ENCODE measurements at regions of chr5 and their contacts with region 1.

Region 1: DNA sequence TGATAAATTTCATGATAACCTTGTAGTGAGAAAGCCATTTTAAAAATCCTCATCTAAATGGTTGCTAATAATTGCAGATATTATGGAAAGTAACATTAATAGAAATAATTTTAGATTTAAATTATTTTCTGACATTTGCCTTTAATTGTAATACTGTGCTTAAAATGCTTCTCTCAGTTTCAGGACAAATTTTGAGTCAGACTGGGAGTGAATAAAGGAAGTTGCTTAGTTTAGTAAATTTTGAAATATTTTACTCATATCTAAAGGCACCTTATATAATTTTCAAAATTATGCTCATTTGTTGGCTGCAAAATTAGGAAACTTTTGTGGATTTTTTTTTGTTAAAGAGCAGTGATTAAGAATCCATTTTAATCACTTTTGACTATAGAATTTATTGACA is 93.8 kb downstream of the CSNK1G3 start:
- DNase-seq: no peak
- ATAC-seq: no peak
- H3K4me3 ChIP-seq: no peak overlapping the region
- H3K27ac ChIP-seq: no peak overlapping the region
- H3K4me1 ChIP-seq: no peaks in the 10 kb centered on the region
- H3K27me3 ChIP-seq: no peaks in the 10 kb centered on the region
- CTCF ChIP-seq: no peak
- POLR2A ChIP-seq: no peak
- RAD21 ChIP-seq: no peak

Region 2: GRCh38 chr5:123398058-123398733 is 207.6 kb before region 1 on chr5:
- CTCF ChIA-PET with region 1: no interaction called
- POLR2A ChIA-PET with region 1: no interaction called
- dilution Hi-C with region 1: no loop called
- in situ Hi-C with region 1: no loop called
- intact Hi-C with region 1: loop called (anchors 10 kb)
- DNase-seq: no peak
- ATAC-seq: no peak
- H3K4me3 ChIP-seq: no peak overlapping the region
- H3K27ac ChIP-seq: no peak overlapping the region
- H3K4me1 ChIP-seq: no peaks in the 10 kb centered on the region
- H3K27me3 ChIP-seq: no peaks in the 10 kb centered on the region
- CTCF ChIP-seq: no peak
- POLR2A ChIP-seq: no peak
- RAD21 ChIP-seq: no peak

Region 3: DNA sequence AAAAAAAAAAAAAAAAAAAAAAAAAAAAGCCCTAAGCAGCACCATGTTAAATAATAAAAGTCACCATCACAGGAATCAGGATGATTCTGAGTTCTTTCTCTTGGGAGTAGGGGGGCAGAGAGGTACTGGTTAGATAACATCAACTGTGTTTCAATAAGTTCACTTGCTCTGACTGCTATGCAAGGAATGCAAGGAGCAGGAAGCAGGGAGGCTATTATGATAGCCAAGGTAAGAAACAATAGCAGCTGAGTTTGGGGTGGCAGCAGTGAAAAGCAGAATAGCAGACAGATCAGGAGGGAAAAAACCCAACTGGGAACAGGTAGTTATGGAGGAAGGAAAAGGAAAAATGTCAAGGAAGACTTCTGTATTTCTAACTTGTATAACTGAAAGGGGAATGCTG is 190.8 kb before region 1 on chr5:
- CTCF ChIA-PET with region 1: interaction called, 7 read pairs
- POLR2A ChIA-PET with region 1: no interaction called
- dilution Hi-C with region 1: no loop called
- in situ Hi-C with region 1: loop called (anchors 10 kb)
- intact Hi-C with region 1: no loop called
- DNase-seq: no peak
- ATAC-seq: no peak
- H3K4me3 ChIP-seq: no peak overlapping the region
- H3K27ac ChIP-seq: no peak overlapping the region
- H3K4me1 ChIP-seq: no peaks in the 10 kb centered on the region
- H3K27me3 ChIP-seq: no peaks in the 10 kb centered on the region
- CTCF ChIP-seq: no peak
- POLR2A ChIP-seq: no peak
- RAD21 ChIP-seq: no peak

Region 4: DNA sequence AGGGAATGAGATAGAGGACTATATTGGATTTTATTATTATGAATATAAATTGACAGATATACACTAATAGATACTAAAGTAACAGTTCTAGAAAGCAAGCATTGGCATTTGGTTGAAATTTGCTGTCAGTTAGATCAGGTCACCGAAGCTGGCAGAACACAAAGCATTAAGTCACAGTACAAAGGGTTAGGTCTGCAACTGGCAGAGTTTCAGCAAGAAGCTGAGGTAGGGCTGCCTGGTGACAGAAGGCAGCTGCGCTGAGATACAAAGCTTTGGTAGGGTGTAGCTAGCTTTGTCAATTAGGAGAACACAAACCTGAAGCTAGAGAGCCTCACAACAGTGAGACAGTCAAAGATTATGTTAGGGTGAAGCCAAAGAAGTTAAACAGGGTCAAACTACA is 100.2 kb before region 1 on chr5:
- CTCF ChIA-PET with region 1: no interaction called
- POLR2A ChIA-PET with region 1: no interaction called
- dilution Hi-C with region 1: no loop called
- in situ Hi-C with region 1: no loop called
- intact Hi-C with region 1: no loop called
- DNase-seq: no peak
- ATAC-seq: no peak
- H3K4me3 ChIP-seq: no peak overlapping the region
- H3K27ac ChIP-seq: no peak overlapping the region
- H3K4me1 ChIP-seq: peaks cover 2% of the 10 kb centered on the region; the same call in 1 of the 2 replicates
- H3K27me3 ChIP-seq: peaks cover 3% of the 10 kb centered on the region; the same call in 1 of the 2 replicates
- CTCF ChIP-seq: no peak
- POLR2A ChIP-seq: no peak
- RAD21 ChIP-seq: no peak

Region 5: DNA sequence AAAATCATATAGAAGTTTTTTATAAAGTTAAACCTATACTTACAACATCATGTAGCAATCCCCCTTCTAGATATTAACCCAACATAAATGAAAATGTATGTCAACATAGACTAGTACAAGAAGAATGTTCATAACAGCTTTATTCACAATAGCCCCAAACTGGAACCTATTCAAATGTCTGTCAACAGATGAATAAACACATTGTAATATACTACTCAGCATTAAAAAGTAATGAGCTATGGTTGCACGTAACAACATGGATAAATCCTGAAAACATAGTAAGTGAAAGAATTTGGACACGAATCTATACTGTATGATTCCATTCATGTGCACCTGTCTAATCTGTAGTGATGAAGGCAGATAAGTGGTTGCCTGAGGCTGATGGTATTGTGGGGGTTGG is 20.0 kb before region 1 on chr5:
- CTCF ChIA-PET with region 1: no interaction called
- POLR2A ChIA-PET with region 1: no interaction called
- dilution Hi-C with region 1: no loop called
- in situ Hi-C with region 1: no loop called
- intact Hi-C with region 1: no loop called
- DNase-seq: no peak
- ATAC-seq: no peak
- H3K4me3 ChIP-seq: no peak overlapping the region
- H3K27ac ChIP-seq: no peak overlapping the region
- H3K4me1 ChIP-seq: no peaks in the 10 kb centered on the region
- H3K27me3 ChIP-seq: no peaks in the 10 kb centered on the region
- CTCF ChIP-seq: no peak
- POLR2A ChIP-seq: no peak
- RAD21 ChIP-seq: no peak

Measured in IMR-90 (cell line).